Activated CD4-positive, alpha-beta T cell treated with anti-CD3 and anti-CD28 coated beads, Interleukin-2, amount 10 ng/mL, durations not matched to agents 7 days and 5 days (primary cell): ENCODE measurements at regions of chr7 and their contacts with region 1.

Region 1: GRCh38 chr7:135274495-135275268 is 41.0 kb downstream of the STRA8 start:
- DNase-seq: peak; percentile 77
- H3K4me3 Mint-ChIP-seq: no peak overlapping the region
- H3K27ac Mint-ChIP-seq: no peak overlapping the region
- H3K4me1 Mint-ChIP-seq: peaks cover 2% of the 10 kb centered on the region
- H3K27me3 Mint-ChIP-seq: peaks cover 3% of the 10 kb centered on the region

Region 2: DNA sequence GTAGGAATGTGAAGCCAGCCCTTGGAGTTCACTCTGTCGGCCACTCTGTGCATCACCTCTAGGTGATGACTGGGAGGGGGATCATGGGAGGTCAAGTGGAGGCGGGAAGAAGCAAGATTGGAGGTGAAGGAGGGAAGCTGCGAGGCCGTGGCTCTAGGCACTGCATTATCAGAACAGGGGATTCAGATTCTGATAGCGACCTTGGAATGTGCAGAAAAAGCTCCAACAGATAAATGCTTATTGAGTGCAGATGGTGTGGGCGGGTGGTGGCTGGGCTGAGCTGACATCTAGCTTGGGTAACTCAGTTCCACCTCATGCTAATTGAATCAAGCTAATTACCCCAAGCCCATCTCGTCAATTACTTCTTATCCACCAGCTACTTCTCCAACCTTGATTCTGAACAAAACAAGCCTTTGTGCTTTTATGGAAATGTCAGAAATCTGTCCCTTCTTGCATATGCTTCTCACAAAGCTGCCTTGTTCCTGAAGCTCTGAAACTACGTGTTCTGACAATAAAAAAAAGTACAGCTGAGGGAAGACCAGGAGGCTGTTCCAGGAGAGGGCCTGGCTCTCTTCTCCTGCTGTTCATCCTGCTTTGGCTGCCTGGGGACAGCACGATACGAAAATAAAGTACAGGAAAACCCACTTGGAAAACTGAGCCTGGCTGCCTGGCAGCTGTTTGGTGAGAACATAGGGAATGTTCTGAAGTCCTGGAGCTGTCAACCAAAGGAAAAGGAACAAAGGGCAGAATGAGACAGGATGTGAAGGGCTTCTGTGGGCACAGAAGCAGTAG is 13.6 kb before region 1 on chr7:
- CTCF ChIA-PET with region 1: interaction called, 13 read pairs
- POLR2A ChIA-PET with region 1: no interaction called
- DNase-seq: no peak
- H3K4me3 Mint-ChIP-seq: no peak overlapping the region
- H3K27ac Mint-ChIP-seq: no peak overlapping the region
- H3K4me1 Mint-ChIP-seq: no peaks in the 10 kb centered on the region
- H3K27me3 Mint-ChIP-seq: no peaks in the 10 kb centered on the region

Region 3: GRCh38 chr7:135335628-135336139 is 61.0 kb after region 1 on chr7:
- CTCF ChIA-PET with region 1: interaction called, 10 read pairs
- POLR2A ChIA-PET with region 1: no interaction called
- DNase-seq: peak; percentile 39
- H3K4me3 Mint-ChIP-seq: no peak overlapping the region
- H3K27ac Mint-ChIP-seq: no peak overlapping the region
- H3K4me1 Mint-ChIP-seq: no peaks in the 10 kb centered on the region
- H3K27me3 Mint-ChIP-seq: no peaks in the 10 kb centered on the region

Region 4: GRCh38 chr7:135690566-135690965 is 415.9 kb after region 1 on chr7:
- CTCF ChIA-PET with region 1: no interaction called
- POLR2A ChIA-PET with region 1: no interaction called
- DNase-seq: no peak
- H3K4me3 Mint-ChIP-seq: no peak overlapping the region
- H3K27ac Mint-ChIP-seq: no peak overlapping the region
- H3K4me1 Mint-ChIP-seq: no peaks in the 10 kb centered on the region
- H3K27me3 Mint-ChIP-seq: no peaks in the 10 kb centered on the region